A673 (cell line): ENCODE measurements at regions of chr14 and their contacts with region 1.

Region 1: DNA sequence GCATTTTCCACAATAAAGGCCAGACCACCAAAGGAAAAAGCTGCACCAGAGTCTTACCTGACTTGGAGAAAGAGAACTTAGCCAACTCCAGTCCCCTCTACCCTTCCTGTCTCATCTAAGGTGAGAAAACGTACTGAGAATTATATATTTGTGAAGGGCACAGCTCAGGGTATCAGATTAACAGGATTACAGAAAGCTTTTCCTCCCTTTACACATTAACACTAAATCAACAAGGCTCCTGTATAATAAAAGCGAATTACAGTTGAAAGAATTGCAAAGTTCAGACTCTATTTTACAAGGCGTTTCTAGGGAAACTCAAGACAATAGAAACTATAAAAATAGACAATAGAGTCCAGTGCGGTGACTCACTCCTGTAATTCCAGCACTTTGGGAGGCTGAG is 82.7 kb upstream of the RPL10L start:
- DNase-seq: no peak
- H3K4me3 ChIP-seq: no peak overlapping the region
- H3K27ac ChIP-seq: no peak overlapping the region
- H3K4me1 ChIP-seq: no peaks in the 10 kb centered on the region
- H3K27me3 ChIP-seq: no peaks in the 10 kb centered on the region
- CTCF ChIP-seq: no peak

Region 2: GRCh38 chr14:46322730-46323403 is 411.4 kb before region 1 on chr14:
- CTCF ChIA-PET with region 1: no interaction called
- POLR2A ChIA-PET with region 1: no interaction called
- intact Hi-C with region 1: loop called (anchors 10 kb)
- DNase-seq: no peak
- H3K4me3 ChIP-seq: no peak overlapping the region
- H3K27ac ChIP-seq: no peak overlapping the region
- H3K4me1 ChIP-seq: no peaks in the 10 kb centered on the region
- H3K27me3 ChIP-seq: no peaks in the 10 kb centered on the region
- CTCF ChIP-seq: no peak